ENCODE measurements at regions of chr16 and their contacts with region 1.

Region 1: GRCh38 chr16:49855280-49855821 is 561 bp downstream of the ZNF423 start:
- DNase-seq: peak; percentile 31 to 69
- ATAC-seq: peak; percentile 48 to 75
- H3K4me3 ChIP-seq: peak overlapping the region; percentile 97
- H3K27ac ChIP-seq: peak overlapping the region; percentile 86 to 91
- H3K4me1 ChIP-seq: peaks cover 21% of the 10 kb centered on the region; the same call in 2 of the 3 replicates
- CTCF ChIP-seq: no peak
- EP300 ChIP-seq: no peak
- POLR2A ChIP-seq: no peak; the same call in 1 of the 2 replicates
- RAD21 ChIP-seq: no peak

Region 2: DNA sequence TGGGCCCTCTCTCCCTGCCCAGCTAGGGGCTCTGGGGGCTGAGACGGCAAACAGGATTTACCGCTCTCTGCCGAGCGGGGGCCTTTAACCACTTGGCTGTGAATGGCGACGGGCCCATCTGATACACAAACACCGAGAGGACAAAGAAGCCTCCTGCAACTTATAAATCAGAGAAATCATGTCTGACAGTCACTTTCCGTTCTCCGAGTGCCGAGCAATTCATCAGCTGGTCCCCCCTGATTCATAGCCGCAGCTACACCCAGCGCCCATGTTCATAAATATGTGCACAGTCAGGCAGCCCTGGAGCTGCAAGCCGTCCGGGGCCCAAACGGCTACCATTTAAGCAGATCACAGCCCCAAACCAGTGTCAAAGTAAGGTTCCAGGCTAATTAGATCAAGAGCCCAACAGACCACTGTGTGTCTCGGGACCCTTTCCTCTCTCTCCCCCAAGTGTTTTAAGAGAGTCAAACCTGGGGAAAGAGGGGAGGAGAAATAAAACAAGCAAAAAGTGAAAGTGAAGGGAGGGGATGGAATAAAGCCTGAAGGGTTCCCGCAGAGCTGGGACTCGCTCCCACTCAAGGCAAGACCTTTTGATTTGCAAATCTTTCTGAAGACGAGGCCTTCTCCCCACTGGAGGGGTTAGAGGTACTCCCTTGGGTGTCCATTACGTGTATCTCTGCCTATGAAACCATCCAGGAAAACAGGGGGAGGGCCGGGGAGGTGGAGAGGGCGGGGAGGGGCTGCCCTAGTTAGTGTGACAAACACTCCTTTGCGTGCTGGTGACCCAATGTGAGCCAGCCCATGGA is 327.1 kb before region 1 on chr16:
- CTCF ChIA-PET with region 1: no interaction called
- POLR2A ChIA-PET with region 1: no interaction called
- DNase-seq: no peak
- ATAC-seq: no peak
- H3K4me3 ChIP-seq: no peak overlapping the region
- H3K27ac ChIP-seq: no peak overlapping the region
- H3K4me1 ChIP-seq: no peaks in the 10 kb centered on the region
- CTCF ChIP-seq: no peak
- EP300 ChIP-seq: no peak
- POLR2A ChIP-seq: no peak
- RAD21 ChIP-seq: no peak

Region 3: DNA sequence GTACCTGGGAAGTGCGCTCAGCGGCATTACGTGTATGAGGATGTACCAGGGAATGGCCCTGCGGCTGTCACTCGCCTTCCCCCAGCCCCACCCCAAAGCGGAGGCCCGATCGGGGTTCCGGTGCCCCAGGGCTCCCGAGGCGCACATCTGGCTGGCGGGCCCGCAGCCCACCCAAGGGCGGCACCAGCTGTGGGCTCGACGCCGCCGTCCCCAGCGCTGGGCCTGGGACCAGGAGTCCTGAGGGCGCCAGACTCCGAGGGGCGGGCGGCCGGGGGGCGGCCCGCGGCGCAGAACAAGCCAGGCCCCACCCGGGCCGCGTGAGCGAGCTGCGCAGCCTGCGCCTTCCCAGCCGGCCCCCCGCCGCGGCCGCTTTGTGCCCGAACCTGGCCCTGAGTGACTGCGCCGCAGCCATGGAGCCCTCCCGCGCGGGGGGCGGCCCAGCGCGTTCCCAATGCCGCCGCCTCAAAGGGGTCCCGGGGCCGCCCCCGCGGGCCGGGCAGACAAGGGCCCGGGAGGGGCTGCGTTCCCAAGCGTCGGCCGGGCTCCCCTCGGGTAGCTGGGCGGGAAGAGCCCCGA is 16.8 kb before region 1 on chr16:
- CTCF ChIA-PET with region 1: interaction called, 12 read pairs
- POLR2A ChIA-PET with region 1: interaction called, 3 read pairs
- DNase-seq: no peak
- ATAC-seq: no peak
- H3K4me3 ChIP-seq: no peak overlapping the region
- H3K27ac ChIP-seq: no peak overlapping the region
- H3K4me1 ChIP-seq: no peaks in the 10 kb centered on the region
- CTCF ChIP-seq: no peak
- EP300 ChIP-seq: no peak
- POLR2A ChIP-seq: no peak
- RAD21 ChIP-seq: no peak

Region 4: GRCh38 chr16:49876716-49877129 is 21.4 kb after region 1 on chr16:
- CTCF ChIA-PET with region 1: interaction called, 116 read pairs
- POLR2A ChIA-PET with region 1: interaction called, 3 read pairs
- DNase-seq: peak; percentile 40 to 90
- ATAC-seq: peak; percentile 84 to 97
- H3K4me3 ChIP-seq: peak overlapping the region; percentile 30
- H3K27ac ChIP-seq: peak overlapping the region in 1 of 2 experiments; percentile 65; a peak in 3 of 6 replicates
- H3K4me1 ChIP-seq: no peaks in the 10 kb centered on the region
- CTCF ChIP-seq: peak; percentile 73
- EP300 ChIP-seq: no peak
- POLR2A ChIP-seq: no peak
- RAD21 ChIP-seq: peak; percentile 27 to 42; a peak in 3 of 5 replicates

Region 5: GRCh38 chr16:49884033-49885015 is 29.0 kb after region 1 on chr16:
- CTCF ChIA-PET with region 1: interaction called, 116 read pairs
- POLR2A ChIA-PET with region 1: no interaction called
- DNase-seq: no peak
- ATAC-seq: peak in 1 of 2 experiments; percentile 36; a peak in 1 of 6 replicates
- H3K4me3 ChIP-seq: no peak overlapping the region
- H3K27ac ChIP-seq: peak overlapping the region in 1 of 2 experiments; percentile 48; a peak in 3 of 6 replicates
- H3K4me1 ChIP-seq: peaks cover 11% of the 10 kb centered on the region; the same call in 1 of the 3 replicates
- CTCF ChIP-seq: no peak
- EP300 ChIP-seq: no peak
- POLR2A ChIP-seq: no peak
- RAD21 ChIP-seq: no peak

Region 6: DNA sequence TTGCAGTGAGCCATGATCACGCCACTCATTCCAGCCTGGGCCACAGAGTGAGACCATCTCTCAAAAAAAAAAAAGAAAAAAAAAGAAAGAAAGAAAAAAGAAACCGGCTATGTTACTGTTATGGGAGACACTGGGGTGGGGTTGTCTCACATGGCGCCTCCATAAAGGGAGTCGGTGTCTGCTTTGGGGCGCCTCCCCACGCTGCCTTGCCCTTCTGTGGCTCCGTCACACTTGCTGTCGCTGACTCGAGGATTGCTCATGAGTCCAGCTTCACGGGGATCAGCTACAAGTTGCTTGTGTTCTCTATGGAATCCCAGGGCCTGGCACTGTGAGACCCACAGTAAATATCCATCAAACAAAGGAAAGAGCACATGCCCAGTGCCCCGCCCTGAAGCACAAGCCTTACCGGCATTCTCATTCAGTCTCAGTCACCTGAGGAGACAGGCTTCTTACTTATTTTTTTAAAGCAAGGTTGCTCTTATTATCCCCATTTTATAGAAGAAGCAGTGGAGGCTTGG is 41.2 kb after region 1 on chr16:
- CTCF ChIA-PET with region 1: interaction called, 11 read pairs
- POLR2A ChIA-PET with region 1: no interaction called
- DNase-seq: no peak
- ATAC-seq: no peak
- H3K4me3 ChIP-seq: no peak overlapping the region
- H3K27ac ChIP-seq: no peak overlapping the region
- H3K4me1 ChIP-seq: no peaks in the 10 kb centered on the region
- CTCF ChIP-seq: no peak
- EP300 ChIP-seq: no peak
- POLR2A ChIP-seq: no peak
- RAD21 ChIP-seq: no peak

Region 7: DNA sequence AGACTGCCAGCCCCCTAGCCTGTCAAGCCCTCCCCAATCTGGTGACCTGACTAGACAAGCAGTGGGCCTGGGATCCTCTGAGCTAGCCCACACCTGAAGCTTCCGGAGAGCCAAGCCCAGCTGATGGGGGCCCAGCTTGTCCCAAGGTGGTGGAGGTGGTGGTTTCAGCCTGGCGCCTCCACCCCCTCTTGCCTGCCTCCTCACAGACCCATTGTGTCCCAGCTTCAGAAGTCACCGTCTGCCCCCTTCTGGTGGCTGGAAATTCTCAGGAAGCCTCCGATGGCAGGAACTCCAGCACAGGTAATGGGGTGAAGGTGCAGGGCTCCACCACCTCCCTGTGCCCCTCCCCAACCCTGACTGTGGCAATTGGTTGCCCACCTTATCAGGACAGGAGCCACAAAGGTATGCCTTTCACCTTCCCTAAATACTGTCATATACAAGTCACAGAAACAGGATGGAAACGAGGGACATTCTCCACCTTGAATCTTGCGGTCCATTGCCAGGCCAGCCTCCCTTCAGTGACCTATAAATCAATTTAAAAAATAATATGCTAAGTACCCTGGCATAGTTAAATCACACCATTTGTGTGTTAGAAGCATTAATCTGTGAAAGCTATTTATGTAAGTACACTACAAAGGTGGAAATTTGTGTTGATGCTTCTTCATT is 66.6 kb after region 1 on chr16:
- CTCF ChIA-PET with region 1: interaction called, 24 read pairs
- POLR2A ChIA-PET with region 1: no interaction called
- DNase-seq: peak; percentile 66
- ATAC-seq: peak; percentile 83 to 90
- H3K4me3 ChIP-seq: no peak overlapping the region
- H3K27ac ChIP-seq: no peak overlapping the region
- H3K4me1 ChIP-seq: no peaks in the 10 kb centered on the region
- CTCF ChIP-seq: peak; percentile 60
- EP300 ChIP-seq: no peak
- POLR2A ChIP-seq: no peak
- RAD21 ChIP-seq: peak; percentile 72 to 85

Measured in A549 (cell line).